B cell (primary cell): ENCODE measurements at regions of chr3 and their contacts with region 1.

Region 1: DNA sequence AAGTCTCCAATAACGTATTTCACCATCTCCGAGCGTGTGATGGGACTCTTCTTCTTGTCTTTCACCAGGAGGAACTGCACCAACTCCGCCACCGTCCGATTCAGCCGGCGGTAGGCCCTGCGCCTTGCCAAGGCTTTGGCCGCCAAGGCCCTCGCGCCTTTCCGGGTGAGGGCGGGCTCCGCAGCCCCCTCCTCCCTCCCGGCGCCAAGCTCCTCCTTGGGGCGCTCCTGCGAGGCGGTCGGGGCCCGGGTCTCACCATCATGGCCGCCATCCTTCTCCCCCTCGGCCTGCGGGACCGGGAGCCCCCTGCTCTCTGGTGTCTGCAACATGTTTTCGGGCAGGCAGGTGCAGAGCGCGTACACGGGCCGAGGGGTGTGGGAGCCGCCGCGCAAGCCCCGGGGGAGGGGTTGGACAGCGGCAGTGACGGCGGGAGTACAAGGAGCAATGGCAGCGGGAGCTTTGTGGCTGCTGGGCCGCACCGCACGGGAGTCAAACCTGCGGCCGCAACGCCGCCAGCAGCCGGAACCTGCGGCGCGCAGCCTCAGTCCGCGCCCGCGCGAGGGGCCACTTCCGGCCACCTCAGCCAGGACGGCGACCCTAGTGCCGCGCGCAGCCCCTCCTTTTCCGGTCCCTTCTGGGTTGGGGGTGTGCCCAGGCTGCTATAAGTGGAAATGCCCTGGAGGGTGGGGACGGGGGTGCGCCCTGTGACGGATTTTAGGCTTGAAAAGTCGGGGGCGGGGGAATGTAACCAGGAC is at the start of gene MAGEF1:
- DNase-seq: peak; percentile 73
- ATAC-seq: peak; percentile 81
- H3K4me3 ChIP-seq: peak within 1 kb of the TSS; percentile 72 to 87 (median 77)
- H3K4me3 Mint-ChIP-seq: peak within 1 kb of the TSS; percentile 92
- H3K27ac ChIP-seq: peak within 1 kb of the TSS; percentile 73 to 78
- H3K27ac Mint-ChIP-seq: peak within 1 kb of the TSS; percentile 92
- H3K4me1 ChIP-seq: peaks cover 14 to 29% of the 10 kb centered on the region in 2 donors
- H3K4me1 Mint-ChIP-seq: peaks cover 30% of the 10 kb centered on the region
- H3K27me3 ChIP-seq: no peaks in the 10 kb centered on the region
- H3K27me3 Mint-ChIP-seq: no peaks in the 10 kb centered on the region
- CTCF ChIP-seq: no peak
- total RNA-seq, gene MAGEF1: 26.2 and 27.1 TPM in 2 replicates

Region 2: DNA sequence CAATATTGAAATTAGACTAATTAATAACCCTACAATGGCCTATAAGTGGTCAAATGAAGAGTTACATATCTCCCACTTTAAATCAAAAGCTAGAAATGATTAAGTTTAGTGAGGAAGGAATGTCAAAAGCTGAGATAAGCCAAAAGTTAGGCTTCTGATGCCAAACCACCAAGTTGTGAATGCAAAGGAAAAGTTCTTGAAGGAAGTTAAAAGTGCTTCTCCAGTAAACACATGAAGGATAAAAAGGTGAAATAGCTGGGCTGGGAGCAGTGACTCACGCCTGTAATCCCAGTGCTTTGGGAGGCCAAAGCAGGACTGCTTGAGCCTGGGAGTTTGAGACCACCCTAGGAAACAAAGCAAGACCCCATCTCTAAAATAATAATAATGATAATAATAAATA is 1684.4 kb before region 1 on chr3:
- CTCF ChIA-PET with region 1: no interaction called
- POLR2A ChIA-PET with region 1: no interaction called
- intact Hi-C with region 1: no loop called
- DNase-seq: no peak
- ATAC-seq: no peak
- H3K4me3 ChIP-seq: no peak overlapping the region
- H3K4me3 Mint-ChIP-seq: no peak overlapping the region
- H3K27ac ChIP-seq: no peak overlapping the region
- H3K27ac Mint-ChIP-seq: no peak overlapping the region
- H3K4me1 ChIP-seq: no peaks in the 10 kb centered on the region
- H3K4me1 Mint-ChIP-seq: no peaks in the 10 kb centered on the region
- H3K27me3 ChIP-seq: no peaks in the 10 kb centered on the region
- H3K27me3 Mint-ChIP-seq: no peaks in the 10 kb centered on the region
- CTCF ChIP-seq: no peak

Region 3: GRCh38 chr3:184185461-184186308 is 526.0 kb before region 1 on chr3 and contains the start of gene ABCF3:
- CTCF ChIA-PET with region 1: no interaction called
- POLR2A ChIA-PET with region 1: no interaction called
- intact Hi-C with region 1: loop called (anchors 5 kb)
- DNase-seq: peak; percentile 100
- ATAC-seq: peak; percentile 94
- H3K4me3 ChIP-seq: peak within 1 kb of the TSS; percentile 70 to 100 (median 97)
- H3K4me3 Mint-ChIP-seq: peak within 1 kb of the TSS; percentile 99
- H3K27ac ChIP-seq: peak within 1 kb of the TSS; percentile 48 to 68
- H3K27ac Mint-ChIP-seq: peak within 1 kb of the TSS; percentile 94
- H3K4me1 ChIP-seq: peaks cover 17 to 21% of the 10 kb centered on the region in 2 donors
- H3K4me1 Mint-ChIP-seq: peaks cover 33% of the 10 kb centered on the region
- H3K27me3 ChIP-seq: no peaks in the 10 kb centered on the region
- H3K27me3 Mint-ChIP-seq: no peaks in the 10 kb centered on the region
- CTCF ChIP-seq: no peak
- total RNA-seq, gene ABCF3: 115 and 131 TPM in 2 replicates

Region 4: GRCh38 chr3:184250167-184250828 is 461.4 kb before region 1 on chr3:
- CTCF ChIA-PET with region 1: no interaction called
- POLR2A ChIA-PET with region 1: no interaction called
- intact Hi-C with region 1: no loop called
- DNase-seq: peak; percentile 92
- ATAC-seq: peak; percentile 65
- H3K4me3 ChIP-seq: peak overlapping the region; percentile 88 to 93 (median 91)
- H3K4me3 Mint-ChIP-seq: peak overlapping the region; percentile 87
- H3K27ac ChIP-seq: peak overlapping the region in 1 of 2 donors; percentile 58
- H3K27ac Mint-ChIP-seq: peak overlapping the region; percentile 78
- H3K4me1 ChIP-seq: peaks cover 5 to 17% of the 10 kb centered on the region in 2 donors
- H3K4me1 Mint-ChIP-seq: peaks cover 9% of the 10 kb centered on the region
- H3K27me3 ChIP-seq: no peaks in the 10 kb centered on the region
- H3K27me3 Mint-ChIP-seq: no peaks in the 10 kb centered on the region
- CTCF ChIP-seq: peak; percentile 94

Region 5: GRCh38 chr3:184354121-184354728 is 357.4 kb before region 1 on chr3:
- CTCF ChIA-PET with region 1: no interaction called
- POLR2A ChIA-PET with region 1: no interaction called
- intact Hi-C with region 1: no loop called
- DNase-seq: peak; percentile 74
- ATAC-seq: peak; percentile 79
- H3K4me3 ChIP-seq: no peak overlapping the region
- H3K4me3 Mint-ChIP-seq: no peak overlapping the region
- H3K27ac ChIP-seq: no peak overlapping the region
- H3K27ac Mint-ChIP-seq: no peak overlapping the region
- H3K4me1 ChIP-seq: peaks cover 0 to 8% of the 10 kb centered on the region in 2 donors
- H3K4me1 Mint-ChIP-seq: no peaks in the 10 kb centered on the region
- H3K27me3 ChIP-seq: no peaks in the 10 kb centered on the region
- H3K27me3 Mint-ChIP-seq: no peaks in the 10 kb centered on the region
- CTCF ChIP-seq: peak; percentile 73

Region 6: DNA sequence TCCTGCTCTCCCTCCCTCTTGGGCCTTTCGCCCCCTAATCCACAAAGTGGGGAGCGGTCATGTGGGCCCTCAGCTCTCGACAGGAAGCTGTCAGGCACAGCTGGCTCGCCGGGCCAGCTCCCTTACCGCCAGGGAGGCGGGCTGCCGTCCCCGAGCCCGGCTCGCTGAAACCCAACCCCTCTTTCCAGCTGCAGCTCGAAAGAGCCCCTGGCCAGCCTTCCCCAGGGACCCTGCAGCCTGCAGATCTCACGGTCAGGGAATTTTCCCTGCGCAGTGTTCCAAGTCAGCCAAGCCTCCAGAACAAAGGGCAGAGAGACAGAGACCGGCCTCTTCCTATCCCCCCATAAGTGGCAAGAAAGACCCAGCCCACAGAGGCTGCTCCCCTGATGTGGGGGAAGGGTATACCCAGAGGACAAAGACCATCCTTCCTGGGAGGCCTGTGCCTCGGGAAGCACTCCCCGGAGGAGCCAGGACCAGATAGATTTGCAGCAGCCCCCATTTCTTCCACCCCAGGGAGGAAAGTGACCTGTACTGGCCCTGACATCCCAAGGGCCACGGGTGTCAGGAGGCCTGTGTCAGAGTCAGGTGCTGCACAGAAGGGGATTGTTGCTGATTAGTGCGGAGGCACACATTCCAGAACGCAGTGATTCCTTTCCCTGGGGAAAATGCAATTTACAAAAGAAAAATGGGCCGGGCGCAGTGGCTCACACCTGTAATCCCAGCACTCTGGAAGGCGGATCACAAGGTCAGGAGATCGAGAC is 32.4 kb before region 1 on chr3:
- CTCF ChIA-PET with region 1: no interaction called
- POLR2A ChIA-PET with region 1: no interaction called
- intact Hi-C with region 1: loop called (anchors 5 kb)
- DNase-seq: no peak
- ATAC-seq: no peak
- H3K4me3 ChIP-seq: no peak overlapping the region
- H3K4me3 Mint-ChIP-seq: no peak overlapping the region
- H3K27ac ChIP-seq: peak overlapping the region in 1 of 2 donors; percentile 19
- H3K27ac Mint-ChIP-seq: no peak overlapping the region
- H3K4me1 ChIP-seq: peaks cover 34 to 36% of the 10 kb centered on the region in 2 donors
- H3K4me1 Mint-ChIP-seq: peaks cover 34% of the 10 kb centered on the region
- H3K27me3 ChIP-seq: no peaks in the 10 kb centered on the region
- H3K27me3 Mint-ChIP-seq: no peaks in the 10 kb centered on the region
- CTCF ChIP-seq: no peak

Region 7: DNA sequence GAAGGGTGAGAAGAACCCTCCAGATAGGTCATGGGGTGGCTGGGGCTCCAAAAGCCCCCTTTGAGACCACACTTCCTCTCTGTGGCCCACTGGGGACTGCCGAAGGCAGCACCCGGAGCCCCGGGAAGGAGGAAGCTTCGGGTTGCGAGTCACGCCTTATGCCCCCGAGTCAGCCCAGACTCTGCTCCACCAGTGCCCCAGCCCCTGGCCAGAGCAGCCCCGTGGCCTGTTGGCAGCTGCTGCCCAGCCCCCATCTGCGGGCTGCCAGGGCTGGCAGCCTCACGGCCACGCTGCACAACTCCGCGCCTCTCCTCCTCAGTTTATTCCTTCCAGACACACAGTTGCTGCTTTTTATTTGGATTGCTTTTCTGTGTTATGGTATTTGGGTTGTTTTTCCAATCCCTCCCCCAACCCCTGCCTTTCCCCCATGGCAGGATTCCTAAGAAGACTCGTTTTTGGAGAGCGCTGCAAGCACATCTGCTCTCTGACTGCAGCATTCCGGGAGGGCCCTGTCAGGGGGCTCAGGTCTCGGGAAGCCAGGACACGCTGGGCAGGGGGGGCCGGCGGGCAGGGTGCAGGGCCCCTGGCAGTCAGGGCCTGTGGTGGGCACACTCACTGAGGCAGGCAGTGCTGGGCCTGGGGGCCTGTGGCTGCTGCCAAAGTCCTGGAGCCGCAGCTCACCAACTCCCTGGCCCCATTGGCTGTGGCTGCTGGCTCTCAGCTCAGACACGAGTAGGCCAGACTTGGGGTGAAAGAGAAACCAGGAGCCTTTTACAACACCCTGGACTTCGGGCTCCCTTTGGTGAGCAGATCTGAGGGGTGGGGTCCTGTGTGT is 20.1 kb before region 1 on chr3:
- CTCF ChIA-PET with region 1: no interaction called
- POLR2A ChIA-PET with region 1: no interaction called
- intact Hi-C with region 1: loop called (anchors 1 kb)
- DNase-seq: peak; percentile 77
- ATAC-seq: peak; percentile 75
- H3K4me3 ChIP-seq: peak overlapping the region in 1 of 5 experiments; percentile 10
- H3K4me3 Mint-ChIP-seq: peak overlapping the region; percentile 47
- H3K27ac ChIP-seq: peak overlapping the region; percentile 49 to 65
- H3K27ac Mint-ChIP-seq: peak overlapping the region; percentile 79
- H3K4me1 ChIP-seq: peaks cover 45 to 58% of the 10 kb centered on the region in 2 donors
- H3K4me1 Mint-ChIP-seq: peaks cover 49% of the 10 kb centered on the region
- H3K27me3 ChIP-seq: no peaks in the 10 kb centered on the region
- H3K27me3 Mint-ChIP-seq: no peaks in the 10 kb centered on the region
- CTCF ChIP-seq: no peak

Region 8: GRCh38 chr3:184777336-184778004 is 65.8 kb after region 1 on chr3:
- CTCF ChIA-PET with region 1: no interaction called
- POLR2A ChIA-PET with region 1: no interaction called
- intact Hi-C with region 1: loop called (anchors 5 kb)
- DNase-seq: peak; percentile 90
- ATAC-seq: peak; percentile 98
- H3K4me3 ChIP-seq: no peak overlapping the region
- H3K4me3 Mint-ChIP-seq: no peak overlapping the region
- H3K27ac ChIP-seq: no peak overlapping the region
- H3K27ac Mint-ChIP-seq: no peak overlapping the region
- H3K4me1 ChIP-seq: no peaks in the 10 kb centered on the region
- H3K4me1 Mint-ChIP-seq: no peaks in the 10 kb centered on the region
- H3K27me3 ChIP-seq: peaks cover 0 to 15% (median 0%) of the 10 kb centered on the region in 4 experiments
- H3K27me3 Mint-ChIP-seq: peaks cover 33% of the 10 kb centered on the region
- CTCF ChIP-seq: peak; percentile 79

Region 9: DNA sequence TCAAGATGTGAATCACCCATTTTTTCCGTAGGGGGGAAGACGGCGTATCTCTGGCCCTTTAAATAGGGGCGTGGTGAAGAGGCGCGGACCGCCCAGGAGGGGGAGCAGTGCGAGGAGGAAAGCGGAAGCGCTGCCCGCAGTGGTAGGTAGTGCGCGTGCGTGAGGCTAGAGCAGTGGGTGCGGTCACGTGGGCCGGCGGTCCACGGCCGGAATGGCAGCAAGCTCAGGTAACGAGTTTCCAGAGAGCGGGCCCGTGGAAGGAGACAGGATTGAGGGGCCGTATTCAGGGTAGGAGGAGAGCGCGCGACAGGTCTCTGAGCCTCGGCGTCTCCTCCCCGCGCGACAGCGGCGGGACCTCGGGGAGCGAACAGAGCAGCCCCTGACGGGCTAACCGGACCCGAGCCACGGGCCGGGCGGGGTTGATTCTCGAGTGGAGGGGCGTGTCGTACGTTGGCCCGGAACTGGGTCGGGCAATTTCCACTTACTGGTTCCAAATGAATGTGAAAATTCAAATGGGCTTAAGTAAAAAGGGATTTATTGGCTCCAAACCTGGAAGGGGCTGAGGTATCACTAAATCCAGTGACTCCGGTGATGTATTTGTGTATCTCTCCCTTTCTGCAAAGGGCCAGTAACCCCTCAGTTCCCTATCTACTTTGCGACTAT is 100.5 kb after region 1 on chr3 and contains the start of gene VPS8:
- CTCF ChIA-PET with region 1: no interaction called
- POLR2A ChIA-PET with region 1: no interaction called
- intact Hi-C with region 1: loop called (anchors 1 kb)
- DNase-seq: peak; percentile 98
- ATAC-seq: peak; percentile 94
- H3K4me3 ChIP-seq: peak within 1 kb of the TSS; percentile 77 to 95 (median 92)
- H3K4me3 Mint-ChIP-seq: peak within 1 kb of the TSS; percentile 93
- H3K27ac ChIP-seq: peak within 1 kb of the TSS; percentile 70 to 76
- H3K27ac Mint-ChIP-seq: peak within 1 kb of the TSS; percentile 96
- H3K4me1 ChIP-seq: peaks cover 16 to 18% of the 10 kb centered on the region in 2 donors
- H3K4me1 Mint-ChIP-seq: peaks cover 28% of the 10 kb centered on the region
- H3K27me3 ChIP-seq: no peaks in the 10 kb centered on the region
- H3K27me3 Mint-ChIP-seq: peaks cover 3% of the 10 kb centered on the region
- CTCF ChIP-seq: peak; percentile 46
- total RNA-seq, gene VPS8: 95.6 and 106 TPM in 2 replicates

Region 10: GRCh38 chr3:185282696-185283394 is 571.2 kb after region 1 on chr3:
- CTCF ChIA-PET with region 1: no interaction called
- POLR2A ChIA-PET with region 1: no interaction called
- intact Hi-C with region 1: loop called (anchors 5 kb)
- DNase-seq: peak; percentile 96
- ATAC-seq: peak; percentile 99
- H3K4me3 ChIP-seq: peak overlapping the region; percentile 68 to 79 (median 77)
- H3K4me3 Mint-ChIP-seq: peak overlapping the region; percentile 90
- H3K27ac ChIP-seq: peak overlapping the region; percentile 54 to 61
- H3K27ac Mint-ChIP-seq: peak overlapping the region; percentile 92
- H3K4me1 ChIP-seq: peaks cover 14 to 15% of the 10 kb centered on the region in 2 donors
- H3K4me1 Mint-ChIP-seq: peaks cover 21% of the 10 kb centered on the region
- H3K27me3 ChIP-seq: peaks cover 0 to 8% (median 4%) of the 10 kb centered on the region in 4 experiments
- H3K27me3 Mint-ChIP-seq: peaks cover 23% of the 10 kb centered on the region
- CTCF ChIP-seq: no peak